Heart right ventricle (tissue), 16 donors: ENCODE measurements at regions of chr12 and their contacts with region 1.

Region 1: DNA sequence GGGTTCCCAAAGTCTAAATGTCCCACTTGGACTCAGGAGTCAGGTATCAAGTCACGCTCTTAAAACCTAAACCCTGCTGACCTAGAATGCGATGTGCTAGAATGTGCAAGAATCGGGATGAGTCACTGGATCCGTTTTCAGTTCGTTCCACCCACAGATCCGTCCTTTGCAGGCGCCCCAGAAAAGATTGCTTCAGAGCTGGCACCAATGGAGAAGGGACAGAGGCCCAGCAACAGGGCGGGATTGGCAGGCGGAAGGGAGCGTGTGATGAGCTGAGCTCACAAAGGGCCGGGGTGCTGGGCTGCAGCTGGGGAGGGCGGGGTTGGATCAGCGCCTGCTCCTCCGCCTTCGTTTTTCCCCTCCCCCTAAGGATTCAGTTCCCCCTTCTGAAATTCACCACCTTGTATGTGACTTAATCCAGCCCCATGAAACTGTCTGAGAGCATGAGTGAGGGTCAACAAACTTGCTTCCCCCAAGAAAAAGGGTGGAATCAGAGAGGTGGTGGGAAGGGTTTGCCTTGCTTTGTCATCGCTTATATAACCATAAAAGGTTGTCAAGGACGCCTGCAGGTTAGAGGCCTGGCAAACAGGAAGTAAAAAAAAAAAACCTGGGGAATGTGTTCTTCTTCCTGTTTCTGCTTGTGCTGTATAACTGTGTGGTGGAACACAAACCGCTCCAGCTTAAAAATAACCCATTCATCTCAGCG is 2.8 kb upstream of the UBC start:
- DNase-seq: peak; percentile 96 to 98
- ATAC-seq: peak; percentile 91 to 94 (median 92)
- H3K4me3 ChIP-seq: peak overlapping the region in 9 of 10 donors; percentile 10 to 92 (median 88)
- H3K27ac ChIP-seq: peak overlapping the region; percentile 96 to 100 (median 100)
- H3K4me1 ChIP-seq: peaks cover 8 to 78% (median 58%) of the 10 kb centered on the region in 9 donors
- H3K27me3 ChIP-seq: no peaks in the 10 kb centered on the region
- CTCF ChIP-seq: no peak

Region 2: DNA sequence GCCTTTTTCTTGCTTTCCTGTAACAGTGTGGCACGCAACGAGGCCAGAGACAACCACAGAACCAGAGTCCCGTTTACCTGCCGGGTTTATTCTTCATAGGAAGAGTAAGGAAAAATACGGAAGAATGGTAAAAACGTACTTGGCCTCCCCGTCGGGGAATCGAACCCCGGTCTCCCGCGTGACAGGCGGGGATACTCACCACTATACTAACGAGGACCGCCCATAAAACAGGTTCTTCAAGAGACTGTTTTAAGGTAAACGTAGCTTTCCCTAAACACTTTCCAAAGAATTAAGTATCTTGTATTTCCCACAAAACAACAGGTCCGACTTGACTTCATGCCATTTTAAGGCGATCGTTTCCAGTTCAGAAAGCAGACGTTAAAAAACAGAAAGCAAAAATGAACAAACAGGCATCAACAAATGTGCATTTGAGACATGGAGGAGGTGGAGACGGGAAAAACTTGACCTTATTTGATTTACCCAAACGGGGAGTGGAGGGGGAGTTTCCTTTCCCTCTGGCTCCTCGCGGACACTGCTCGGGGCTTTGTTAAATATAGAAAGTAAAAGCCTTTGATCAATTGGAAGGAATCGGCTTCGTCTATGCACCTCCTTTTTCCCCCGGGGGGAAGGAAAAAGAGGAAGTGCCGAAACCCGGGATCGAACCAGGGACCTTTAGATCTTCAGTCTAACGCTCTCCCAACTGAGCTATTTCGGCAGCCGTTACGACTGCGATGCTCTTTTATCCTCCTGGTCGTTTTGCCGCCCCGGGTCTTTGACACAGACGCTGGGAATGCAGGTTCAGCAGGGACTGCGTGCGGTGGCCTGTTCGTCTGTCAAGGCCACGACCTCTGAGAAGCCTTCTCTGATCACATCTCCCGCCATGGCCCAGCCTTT is 10.2 kb after region 1 on chr12:
- intact Hi-C with region 1: loop called in 2 of 10 experiments (anchors 1 kb)
- DNase-seq: peak; percentile 87 to 93
- ATAC-seq: peak; percentile 88 to 97 (median 93)
- H3K4me3 ChIP-seq: peak overlapping the region; percentile 49 to 84 (median 70)
- H3K27ac ChIP-seq: peak overlapping the region; percentile 86 to 97 (median 92)
- H3K4me1 ChIP-seq: peaks cover 0 to 27% (median 8%) of the 10 kb centered on the region in 9 donors
- H3K27me3 ChIP-seq: no peaks in the 10 kb centered on the region
- CTCF ChIP-seq: no peak

Region 3: DNA sequence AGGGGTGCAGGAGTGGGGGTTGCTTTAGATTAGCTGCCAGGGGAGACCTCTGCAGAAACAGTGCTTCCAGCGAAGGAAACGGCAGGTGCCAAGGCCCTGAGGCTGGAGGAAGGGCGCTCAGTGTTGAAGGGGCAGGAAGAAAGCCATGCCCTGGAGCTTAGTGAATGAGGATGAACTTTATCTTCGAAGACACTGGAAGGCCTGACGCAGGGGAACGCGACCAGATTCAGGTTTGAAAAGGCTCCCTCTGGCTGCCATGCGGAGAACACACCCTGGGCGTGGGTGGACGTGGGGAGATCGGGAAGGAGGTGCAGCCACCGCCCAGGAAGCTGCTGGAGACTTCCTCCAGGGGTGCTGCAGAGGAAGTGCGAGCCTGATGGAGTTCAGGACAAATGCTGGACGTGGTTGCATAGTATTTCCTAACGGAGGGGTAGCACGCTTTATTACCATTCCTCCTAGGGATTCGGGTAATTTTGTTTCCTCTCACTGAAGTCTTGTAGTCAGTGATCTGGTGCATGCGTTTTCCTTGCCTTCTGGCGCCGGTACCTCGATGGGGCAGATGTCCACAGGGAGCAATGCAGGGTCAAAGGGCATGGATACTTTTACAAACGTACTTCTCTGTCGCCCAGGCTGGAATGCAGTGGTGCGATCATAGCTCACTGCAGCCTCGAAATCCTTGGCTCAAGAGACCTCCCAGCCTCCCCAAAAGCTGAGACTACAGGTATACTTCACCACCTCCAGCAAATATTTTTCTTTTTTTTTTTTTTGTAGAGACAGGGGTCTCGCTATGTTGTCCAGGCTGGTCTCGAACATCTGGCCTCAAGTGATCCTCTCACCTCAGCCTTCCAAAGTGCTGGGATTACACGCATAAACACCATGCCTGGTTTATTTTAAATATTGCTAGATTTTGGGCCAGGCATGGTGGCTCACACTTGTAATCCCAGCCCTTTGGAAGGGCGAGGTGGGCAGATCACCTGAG is 23.6 kb after region 1 on chr12:
- intact Hi-C with region 1: loop called in 2 of 10 experiments (anchors 1 kb)
- DNase-seq: peak; percentile 89 to 92
- ATAC-seq: peak; percentile 75 to 90 (median 82)
- H3K4me3 ChIP-seq: peak overlapping the region in 9 of 10 donors; percentile 35 to 66 (median 54)
- H3K27ac ChIP-seq: peak overlapping the region; percentile 66 to 95 (median 87)
- H3K4me1 ChIP-seq: peaks cover 5 to 47% (median 30%) of the 10 kb centered on the region in 9 donors
- H3K27me3 ChIP-seq: no peaks in the 10 kb centered on the region
- CTCF ChIP-seq: peak; percentile 87 to 96 (median 93)